SK-N-SH (cell line): ENCODE measurements at regions of chr14 and their contacts with region 1.

Region 1: GRCh38 chr14:50619556-50620141 is 48.5 kb downstream of the SAV1 start:
- DNase-seq: peak; percentile 27
- H3K4me3 ChIP-seq: no peak overlapping the region
- H3K27ac ChIP-seq: peak overlapping the region in 1 of 2 experiments; percentile 3; a peak in 1 of 4 replicates
- H3K4me1 ChIP-seq: peaks cover 0 to 11% of the 10 kb centered on the region in 2 experiments; a peak in 1 of 4 replicates
- H3K27me3 ChIP-seq: no peaks in the 10 kb centered on the region
- CTCF ChIP-seq: peak; percentile 73
- EP300 ChIP-seq: no peak
- RAD21 ChIP-seq: peak; percentile 69

Region 2: DNA sequence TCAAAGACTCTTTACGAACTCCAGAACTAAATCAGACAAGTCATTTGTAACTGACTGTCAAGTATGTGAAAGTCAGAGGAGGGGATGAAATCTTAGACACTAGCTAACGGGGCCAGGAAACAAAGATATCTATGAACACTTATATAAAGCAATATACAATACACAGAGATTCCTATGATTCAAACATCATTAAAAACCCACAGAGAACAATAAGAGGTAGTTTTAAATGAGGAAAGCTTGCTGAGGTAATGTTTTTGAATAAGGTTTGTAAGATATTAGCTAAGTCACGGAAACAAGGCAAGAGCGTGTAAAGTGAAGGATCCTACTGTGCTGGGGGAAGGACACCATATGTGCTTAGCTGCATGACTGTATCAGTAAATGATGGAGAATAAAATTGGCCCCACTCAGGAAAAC is 11.8 kb after region 1 on chr14:
- CTCF ChIA-PET with region 1: interaction called, 11 read pairs
- POLR2A ChIA-PET with region 1: no interaction called
- DNase-seq: no peak
- H3K4me3 ChIP-seq: 0 out of 4 replicates have a peak overlapping the region, but pooled peaks of 1 of the 2 experiments have one; percentile 4
- H3K27ac ChIP-seq: peak overlapping the region; percentile 48 to 71
- H3K4me1 ChIP-seq: peaks cover 0 to 18% of the 10 kb centered on the region in 2 experiments; a peak in 3 of 4 replicates
- H3K27me3 ChIP-seq: no peaks in the 10 kb centered on the region
- CTCF ChIP-seq: no peak
- EP300 ChIP-seq: no peak
- RAD21 ChIP-seq: no peak